GM12878 (cell line): ENCODE measurements at regions of chr4 and their contacts with region 1.

Region 1: DNA sequence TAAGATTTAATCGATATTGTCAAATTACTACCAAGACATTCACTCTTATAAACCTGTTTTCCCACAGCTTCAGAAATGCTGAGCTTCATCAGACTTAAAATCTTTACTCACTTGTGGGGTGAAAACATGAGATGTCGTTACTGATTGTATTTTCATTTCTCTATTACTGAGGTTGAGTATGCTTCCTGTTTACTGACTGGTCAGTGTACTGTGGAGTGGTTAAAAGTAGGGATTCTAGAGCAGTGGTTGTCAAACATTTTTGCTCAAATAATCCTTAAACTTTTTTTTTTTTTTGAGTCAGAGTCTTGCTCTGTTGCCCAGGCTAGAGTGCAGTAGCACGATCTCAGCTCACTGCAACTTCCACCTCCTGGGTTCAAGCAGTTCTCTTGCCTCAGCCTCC is 50.3 kb downstream of the NSUN7 start:
- DNase-seq: peak; percentile 41
- ATAC-seq: peak; percentile 96
- H3K4me3 ChIP-seq: no peak overlapping the region
- H3K27ac ChIP-seq: no peak overlapping the region; the same call in 1 of the 2 replicates
- H3K4me1 ChIP-seq: peaks cover 3% of the 10 kb centered on the region; the same call in 1 of the 2 replicates
- H3K27me3 ChIP-seq: no peaks in the 10 kb centered on the region
- CTCF ChIP-seq: no peak
- EP300 ChIP-seq: peak in 1 of 2 experiments; percentile 51; a peak in 1 of 4 replicates
- POLR2A ChIP-seq: no peak
- RAD21 ChIP-seq: no peak

Region 2: DNA sequence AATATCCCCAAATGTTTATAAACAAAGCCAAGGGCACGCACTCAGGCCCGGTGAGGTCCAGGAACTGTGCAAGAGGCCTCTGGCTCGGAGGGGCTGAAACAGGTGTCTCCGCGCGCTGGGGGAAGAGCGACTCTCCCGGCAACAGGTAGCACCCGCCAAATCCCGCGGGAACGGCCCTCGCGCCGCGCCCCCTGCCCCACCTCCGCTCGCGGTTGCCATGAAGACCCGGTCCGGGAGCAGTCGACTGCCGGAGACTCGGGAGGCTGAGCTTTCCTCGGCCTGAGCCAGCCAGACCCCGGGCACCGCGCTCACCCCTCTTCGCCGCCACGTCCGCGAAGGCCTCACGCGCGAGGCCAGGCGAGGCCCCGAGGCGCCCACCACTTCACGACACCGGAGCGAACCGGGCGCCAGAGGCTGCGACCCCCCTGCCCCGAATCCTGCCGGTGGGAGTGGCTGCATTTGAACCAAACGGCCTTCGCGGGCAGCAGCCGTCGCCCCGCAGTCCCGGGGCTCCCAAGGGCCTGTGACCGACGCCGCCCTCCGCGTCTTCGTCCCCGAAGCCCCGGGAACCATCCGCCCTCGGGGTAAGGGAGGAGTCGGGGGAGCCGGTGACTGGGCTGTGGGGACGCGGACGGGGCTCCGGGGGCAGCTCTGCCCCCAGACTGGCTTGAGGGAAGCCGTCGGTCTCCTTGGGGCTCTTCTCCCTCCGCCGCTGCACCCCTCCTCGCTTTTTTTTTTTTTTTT is 50.2 kb before region 1 on chr4 and contains the start of gene NSUN7:
- CTCF ChIA-PET with region 1: no interaction called
- POLR2A ChIA-PET with region 1: no interaction called
- RAD21 ChIA-PET with region 1: no interaction called
- SMC1A ChIA-PET with region 1: no interaction called
- in situ Hi-C with region 1: no loop called
- intact Hi-C with region 1: loop called (anchors 5 kb)
- DNase-seq: no peak
- ATAC-seq: peak; percentile 87
- H3K4me3 ChIP-seq: peak within 1 kb of the TSS; percentile 69; the same call in 1 of the 2 replicates
- H3K27ac ChIP-seq: no peak within 1 kb of the TSS
- H3K4me1 ChIP-seq: no peaks in the 10 kb centered on the region
- H3K27me3 ChIP-seq: peaks cover 0 to 1% of the 10 kb centered on the region in 2 experiments; a peak in 2 of 4 replicates
- CTCF ChIP-seq: no peak
- EP300 ChIP-seq: no peak
- POLR2A ChIP-seq: peak; percentile 38; the same call in 1 of the 2 replicates
- RAD21 ChIP-seq: no peak
- polyA plus RNA-seq, gene NSUN7: 0.02 to 0.08 TPM

Region 3: GRCh38 chr4:40822420-40823166 is 22.5 kb after region 1 on chr4:
- CTCF ChIA-PET with region 1: no interaction called
- POLR2A ChIA-PET with region 1: no interaction called
- RAD21 ChIA-PET with region 1: no interaction called
- SMC1A ChIA-PET with region 1: no interaction called
- in situ Hi-C with region 1: no loop called
- intact Hi-C with region 1: no loop called
- DNase-seq: no peak
- ATAC-seq: no peak
- H3K4me3 ChIP-seq: no peak overlapping the region
- H3K27ac ChIP-seq: no peak overlapping the region
- H3K4me1 ChIP-seq: peaks cover 10% of the 10 kb centered on the region
- H3K27me3 ChIP-seq: no peaks in the 10 kb centered on the region
- CTCF ChIP-seq: no peak
- EP300 ChIP-seq: no peak
- POLR2A ChIP-seq: no peak
- RAD21 ChIP-seq: no peak

Region 4: DNA sequence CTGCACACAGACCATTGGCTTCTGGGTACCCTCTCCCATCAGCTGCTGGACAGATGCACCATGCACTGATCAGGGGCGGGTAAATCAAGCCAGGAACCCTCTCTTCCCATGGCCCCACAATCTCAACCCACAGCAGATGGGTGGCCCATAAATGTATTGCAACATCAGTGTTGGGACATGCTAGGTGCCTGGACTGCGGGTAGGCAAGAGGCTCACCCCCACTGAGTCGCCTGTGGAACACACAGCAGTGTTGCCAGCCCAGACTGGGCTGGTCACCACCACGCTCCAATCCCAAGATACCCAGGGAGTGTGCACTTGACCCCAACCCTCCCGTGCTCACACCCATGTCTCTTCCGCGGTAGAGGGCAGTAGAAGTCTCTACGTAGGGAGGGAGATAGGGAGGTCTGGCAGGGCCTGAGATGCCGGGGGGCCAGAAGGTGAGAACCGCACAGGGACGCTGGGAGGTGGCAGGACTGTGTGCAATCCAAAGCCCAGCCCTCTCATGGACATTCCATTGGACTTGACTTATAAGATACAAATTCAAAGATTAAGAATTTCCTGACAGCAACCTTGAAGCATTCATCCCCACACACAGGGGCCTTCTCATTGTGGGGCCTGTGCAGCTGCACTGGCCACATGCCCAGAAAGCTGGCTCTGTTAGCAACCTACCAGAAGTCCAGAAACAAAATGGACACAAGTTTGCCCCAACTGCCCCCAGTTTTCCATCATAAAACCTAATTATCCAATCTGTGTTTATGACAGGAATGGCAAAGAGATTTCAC is 133.4 kb after region 1 on chr4:
- CTCF ChIA-PET with region 1: no interaction called
- POLR2A ChIA-PET with region 1: no interaction called
- RAD21 ChIA-PET with region 1: no interaction called
- SMC1A ChIA-PET with region 1: no interaction called
- in situ Hi-C with region 1: no loop called
- intact Hi-C with region 1: no loop called
- DNase-seq: no peak
- ATAC-seq: no peak
- H3K4me3 ChIP-seq: no peak overlapping the region
- H3K27ac ChIP-seq: no peak overlapping the region
- H3K4me1 ChIP-seq: no peaks in the 10 kb centered on the region
- H3K27me3 ChIP-seq: no peaks in the 10 kb centered on the region; a peak in 1 of 4 replicates
- CTCF ChIP-seq: no peak
- EP300 ChIP-seq: no peak
- POLR2A ChIP-seq: no peak
- RAD21 ChIP-seq: no peak

Region 5: GRCh38 chr4:41569961-41570360 is 769.9 kb after region 1 on chr4:
- CTCF ChIA-PET with region 1: no interaction called
- POLR2A ChIA-PET with region 1: no interaction called
- RAD21 ChIA-PET with region 1: no interaction called
- SMC1A ChIA-PET with region 1: no interaction called
- in situ Hi-C with region 1: no loop called
- intact Hi-C with region 1: no loop called
- DNase-seq: no peak
- ATAC-seq: no peak
- H3K4me3 ChIP-seq: no peak overlapping the region
- H3K27ac ChIP-seq: no peak overlapping the region
- H3K4me1 ChIP-seq: no peaks in the 10 kb centered on the region
- H3K27me3 ChIP-seq: peaks cover 3% of the 10 kb centered on the region in 2 experiments; a peak in 3 of 4 replicates
- CTCF ChIP-seq: no peak
- EP300 ChIP-seq: no peak
- POLR2A ChIP-seq: no peak
- RAD21 ChIP-seq: no peak